ENCODE measurements at regions of chr6 and their contacts with region 1.

Region 1: DNA sequence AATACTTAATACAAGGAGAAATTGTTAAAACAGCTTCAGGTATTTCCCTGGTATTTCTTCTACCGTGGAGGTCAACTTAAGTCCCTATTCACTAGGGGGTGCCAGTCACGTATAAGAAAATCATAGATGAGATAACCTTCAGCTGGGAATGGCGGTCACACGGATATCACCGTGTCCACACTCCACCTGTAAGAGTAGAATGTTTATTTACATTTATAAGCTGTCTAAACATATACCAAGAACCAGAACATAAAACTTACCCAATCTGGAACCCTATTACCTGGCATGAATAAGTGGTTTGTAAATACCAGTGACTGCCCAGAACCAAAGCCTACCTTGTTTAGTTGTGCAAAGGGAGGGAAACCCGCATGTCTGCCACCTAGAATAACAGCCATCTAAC is 1.9 kb upstream of the ELOVL4 start:
- DNase-seq: peak; percentile 72
- ATAC-seq: 0 out of 2 replicates have a peak, but pooled peaks have one; percentile 6
- H3K4me3 Mint-ChIP-seq: peak overlapping the region; percentile 43
- H3K27ac Mint-ChIP-seq: no peak overlapping the region
- H3K4me1 Mint-ChIP-seq: peaks cover 27% of the 10 kb centered on the region
- H3K27me3 Mint-ChIP-seq: peaks cover 8% of the 10 kb centered on the region
- CTCF ChIP-seq: peak; percentile 64

Region 2: GRCh38 chr6:79861023-79861422 is 88.2 kb before region 1 on chr6:
- CTCF ChIA-PET with region 1: no interaction called
- POLR2A ChIA-PET with region 1: no interaction called
- DNase-seq: no peak
- ATAC-seq: no peak
- H3K4me3 Mint-ChIP-seq: no peak overlapping the region
- H3K27ac Mint-ChIP-seq: no peak overlapping the region
- H3K4me1 Mint-ChIP-seq: no peaks in the 10 kb centered on the region
- H3K27me3 Mint-ChIP-seq: no peaks in the 10 kb centered on the region
- CTCF ChIP-seq: no peak

Region 3: DNA sequence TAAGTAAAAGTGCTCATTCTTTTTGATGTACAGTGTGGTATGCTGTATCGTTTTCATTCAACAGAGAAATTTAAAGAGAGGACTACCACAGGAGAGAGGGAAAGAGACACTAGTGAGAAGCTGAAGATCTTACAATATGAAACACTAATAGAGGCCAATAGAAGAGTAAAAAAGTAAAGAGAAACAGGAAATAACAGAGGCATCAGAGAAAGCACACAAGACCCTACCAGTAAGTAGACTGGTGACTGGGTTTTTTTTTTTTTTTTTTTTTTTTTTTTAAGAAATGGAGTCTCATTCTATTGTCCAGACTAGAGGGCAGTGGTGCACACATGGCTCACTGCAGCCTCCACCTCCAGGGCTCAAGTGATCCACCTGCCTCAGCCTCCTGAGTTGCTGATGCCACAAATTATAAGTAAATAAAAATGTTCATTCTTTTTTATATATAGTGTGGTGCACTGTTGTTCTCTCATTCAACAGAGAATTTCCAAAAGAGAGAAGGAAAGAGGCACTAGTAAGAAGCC is 20.7 kb before region 1 on chr6:
- CTCF ChIA-PET with region 1: interaction called, 13 read pairs
- POLR2A ChIA-PET with region 1: no interaction called
- DNase-seq: no peak
- ATAC-seq: no peak
- H3K4me3 Mint-ChIP-seq: no peak overlapping the region
- H3K27ac Mint-ChIP-seq: 0 out of 2 replicates have a peak overlapping the region, but pooled peaks have one; percentile 21
- H3K4me1 Mint-ChIP-seq: peaks cover 14% of the 10 kb centered on the region
- H3K27me3 Mint-ChIP-seq: no peaks in the 10 kb centered on the region
- CTCF ChIP-seq: no peak

Region 4: DNA sequence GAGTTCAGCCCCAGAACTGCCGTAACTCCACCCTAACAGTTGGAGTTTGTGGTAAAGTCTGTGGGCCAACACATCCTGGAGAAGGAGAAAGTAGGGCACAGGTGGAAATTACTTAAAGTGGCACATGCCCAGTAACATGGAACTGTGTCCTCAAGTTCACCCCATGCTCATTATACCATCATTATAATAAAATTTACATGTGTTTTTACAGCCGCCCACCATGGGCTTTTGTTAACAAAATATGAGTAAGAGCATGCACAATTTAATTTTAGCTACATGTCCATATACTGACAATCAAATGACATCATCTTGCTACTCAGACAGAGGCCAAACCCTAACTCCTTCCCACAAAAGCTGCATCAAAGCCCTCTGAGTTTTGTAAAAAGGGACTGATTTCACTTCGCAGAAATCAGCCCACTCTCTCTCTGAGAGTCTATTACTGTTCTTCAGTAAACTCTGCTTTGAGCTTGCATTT is 15.4 kb after region 1 on chr6:
- CTCF ChIA-PET with region 1: interaction called, 14 read pairs
- POLR2A ChIA-PET with region 1: no interaction called
- DNase-seq: no peak
- ATAC-seq: no peak
- H3K4me3 Mint-ChIP-seq: no peak overlapping the region
- H3K27ac Mint-ChIP-seq: no peak overlapping the region
- H3K4me1 Mint-ChIP-seq: no peaks in the 10 kb centered on the region
- H3K27me3 Mint-ChIP-seq: no peaks in the 10 kb centered on the region
- CTCF ChIP-seq: no peak

Region 5: DNA sequence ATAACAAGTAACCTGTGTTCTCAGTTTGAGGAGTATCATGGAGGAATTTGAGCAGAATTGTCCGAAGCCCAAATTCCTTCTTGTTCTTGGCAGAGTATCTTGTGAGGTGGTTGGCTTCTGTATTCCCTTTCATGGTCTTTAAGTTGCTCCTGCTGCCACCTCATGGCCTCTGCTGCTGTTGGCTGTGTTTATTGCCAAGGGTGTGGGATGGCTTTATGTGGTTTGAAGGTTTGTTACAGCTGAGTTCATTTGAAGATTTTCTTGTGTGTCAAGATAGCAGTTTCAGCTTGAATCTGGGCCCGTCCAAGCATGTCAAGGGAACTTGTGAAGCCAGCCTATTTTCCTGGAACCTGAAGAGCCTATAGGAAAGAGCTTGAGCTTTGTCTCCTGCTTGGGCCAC is 35.0 kb after region 1 on chr6:
- CTCF ChIA-PET with region 1: interaction called, 16 read pairs
- POLR2A ChIA-PET with region 1: no interaction called
- DNase-seq: no peak
- ATAC-seq: peak; percentile 90
- H3K4me3 Mint-ChIP-seq: no peak overlapping the region
- H3K27ac Mint-ChIP-seq: no peak overlapping the region
- H3K4me1 Mint-ChIP-seq: no peaks in the 10 kb centered on the region
- H3K27me3 Mint-ChIP-seq: no peaks in the 10 kb centered on the region; the same call in 1 of the 2 replicates
- CTCF ChIP-seq: no peak

Region 6: GRCh38 chr6:80004173-80005072 is 55.2 kb after region 1 on chr6 and contains the start of gene TTK:
- CTCF ChIA-PET with region 1: interaction called, 18 read pairs
- POLR2A ChIA-PET with region 1: interaction called, 4 read pairs
- DNase-seq: peak; percentile 85
- ATAC-seq: peak; percentile 99
- H3K4me3 Mint-ChIP-seq: peak within 1 kb of the TSS; percentile 92
- H3K27ac Mint-ChIP-seq: peak within 1 kb of the TSS; percentile 98
- H3K4me1 Mint-ChIP-seq: peaks cover 29% of the 10 kb centered on the region
- H3K27me3 Mint-ChIP-seq: no peaks in the 10 kb centered on the region
- CTCF ChIP-seq: no peak
- total RNA-seq, gene TTK: 47.2 to 51.0 TPM (median 49.4 TPM) in 3 replicates

Measured in WTC11 (cell line).